Vagina (tissue), 2 donors: ENCODE measurements at regions of chr2 and their contacts with region 1.

Region 1: DNA sequence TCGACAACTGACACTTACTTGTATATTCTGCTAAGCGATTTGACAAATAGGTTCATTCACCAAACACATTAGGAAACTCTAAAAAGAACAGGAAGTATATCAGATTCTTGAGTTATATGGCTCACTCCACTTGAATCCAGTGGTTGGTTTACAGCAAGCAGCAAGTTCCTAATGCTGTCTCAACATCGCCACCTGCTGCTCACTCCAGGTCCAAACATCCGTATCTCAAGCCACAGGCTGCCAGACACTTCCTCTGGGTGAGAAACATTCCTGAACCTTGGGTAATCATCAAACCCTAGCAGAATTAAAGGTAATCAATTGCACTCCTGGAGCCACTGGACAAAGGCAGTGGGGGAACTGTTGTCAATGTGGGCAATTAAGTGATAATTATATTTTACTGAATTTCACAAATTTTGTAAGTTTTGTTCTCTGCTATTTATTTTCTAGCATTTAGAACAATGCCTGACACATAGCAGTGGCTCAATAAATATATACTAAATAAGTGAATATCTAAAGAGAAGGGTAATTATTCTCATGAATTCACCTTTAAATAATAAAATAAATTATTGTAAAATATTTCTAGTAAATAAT is 107.1 kb upstream of the TTN start:
- DNase-seq: no peak
- H3K4me3 ChIP-seq: no peak overlapping the region
- H3K27ac ChIP-seq: no peak overlapping the region
- H3K4me1 ChIP-seq: no peaks in the 10 kb centered on the region
- H3K27me3 ChIP-seq: no peaks in the 10 kb centered on the region
- CTCF ChIP-seq: peak in 1 of 3 experiments; percentile 64
- POLR2A ChIP-seq: no peak

Region 2: GRCh38 chr2:178542569-178542968 is 371.8 kb before region 1 on chr2:
- intact Hi-C with region 1: no loop called
- DNase-seq: peak in 1 of 2 donors; percentile 20
- H3K4me3 ChIP-seq: no peak overlapping the region
- H3K27ac ChIP-seq: no peak overlapping the region
- H3K4me1 ChIP-seq: no peaks in the 10 kb centered on the region
- H3K27me3 ChIP-seq: no peaks in the 10 kb centered on the region
- CTCF ChIP-seq: no peak
- POLR2A ChIP-seq: no peak

Region 3: GRCh38 chr2:178761759-178762371 is 152.5 kb before region 1 on chr2:
- intact Hi-C with region 1: no loop called
- DNase-seq: no peak
- H3K4me3 ChIP-seq: no peak overlapping the region
- H3K27ac ChIP-seq: no peak overlapping the region
- H3K4me1 ChIP-seq: no peaks in the 10 kb centered on the region
- H3K27me3 ChIP-seq: no peaks in the 10 kb centered on the region
- CTCF ChIP-seq: peak; percentile 35 to 40 (median 36)
- POLR2A ChIP-seq: no peak

Region 4: GRCh38 chr2:178796079-178796677 is 118.2 kb before region 1 on chr2:
- intact Hi-C with region 1: loop called (anchors 2 kb)
- DNase-seq: no peak
- H3K4me3 ChIP-seq: no peak overlapping the region
- H3K27ac ChIP-seq: no peak overlapping the region
- H3K4me1 ChIP-seq: no peaks in the 10 kb centered on the region
- H3K27me3 ChIP-seq: no peaks in the 10 kb centered on the region
- CTCF ChIP-seq: peak in 2 of 3 experiments; percentile 29 to 30
- POLR2A ChIP-seq: no peak

Region 5: GRCh38 chr2:178928077-178928476 is 13.7 kb after region 1 on chr2:
- intact Hi-C with region 1: no loop called
- DNase-seq: no peak
- H3K4me3 ChIP-seq: no peak overlapping the region
- H3K27ac ChIP-seq: no peak overlapping the region
- H3K4me1 ChIP-seq: no peaks in the 10 kb centered on the region
- H3K27me3 ChIP-seq: no peaks in the 10 kb centered on the region
- CTCF ChIP-seq: no peak
- POLR2A ChIP-seq: no peak